Gastrocnemius medialis (tissue), 4 donors: ENCODE measurements at regions of chr6 and their contacts with region 1.

Region 1: GRCh38 chr6:11434565-11435326 is 102.8 kb upstream of the TMEM170B start:
- DNase-seq: peak in 1 of 2 donors; percentile 47
- ATAC-seq: peak; percentile 20 to 53
- H3K4me3 ChIP-seq: no peak overlapping the region
- H3K27ac ChIP-seq: peak overlapping the region in 3 of 4 donors; percentile 71 to 77 (median 76)
- H3K4me1 ChIP-seq: peaks cover 24 to 31% of the 10 kb centered on the region in 2 donors
- H3K27me3 ChIP-seq: no peaks in the 10 kb centered on the region
- CTCF ChIP-seq: no peak
- POLR2A ChIP-seq: no peak

Region 2: DNA sequence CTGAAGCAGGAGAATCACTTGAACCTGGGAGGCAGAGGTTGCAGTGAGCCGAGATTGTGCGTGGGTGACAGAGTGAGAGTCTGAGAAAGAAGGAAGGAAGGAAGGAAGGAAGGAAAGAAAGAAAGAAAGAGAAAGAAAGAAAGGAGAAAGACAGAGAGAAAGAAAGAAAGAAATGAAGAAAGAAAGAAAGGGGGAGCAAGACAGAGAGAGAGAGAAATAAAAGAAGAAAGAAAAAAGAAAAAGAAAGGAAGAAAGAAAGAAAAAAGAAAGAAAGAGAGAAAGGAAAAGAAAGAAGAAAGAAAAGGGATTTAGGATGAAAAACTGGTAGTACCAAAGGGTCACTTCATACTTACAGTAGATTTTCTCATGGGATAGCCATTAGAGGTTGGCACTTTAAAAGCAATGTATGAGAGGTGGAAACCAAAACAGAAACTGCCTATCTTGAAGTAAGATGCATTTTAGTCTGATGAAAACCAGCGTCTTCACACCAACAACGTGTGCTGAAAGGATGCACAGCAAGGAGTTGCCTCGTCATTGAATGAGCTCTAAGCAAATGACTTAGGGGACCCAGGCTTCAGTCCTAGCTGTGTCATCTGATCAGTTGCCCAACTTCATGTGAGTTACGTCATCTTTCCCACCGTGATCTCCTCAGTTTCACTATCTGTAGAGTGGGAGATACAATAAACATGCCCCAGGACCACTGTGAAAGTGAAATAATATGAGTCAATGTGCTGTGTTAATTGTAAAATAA is 68.4 kb before region 1 on chr6:
- in situ Hi-C with region 1: no loop called
- intact Hi-C with region 1: loop called (anchors 5 kb)
- DNase-seq: no peak
- ATAC-seq: no peak
- H3K4me3 ChIP-seq: no peak overlapping the region
- H3K27ac ChIP-seq: peak overlapping the region; percentile 79 to 88 (median 83)
- H3K4me1 ChIP-seq: peaks cover 0 to 23% of the 10 kb centered on the region in 2 donors
- H3K27me3 ChIP-seq: no peaks in the 10 kb centered on the region
- CTCF ChIP-seq: no peak
- POLR2A ChIP-seq: no peak

Region 3: DNA sequence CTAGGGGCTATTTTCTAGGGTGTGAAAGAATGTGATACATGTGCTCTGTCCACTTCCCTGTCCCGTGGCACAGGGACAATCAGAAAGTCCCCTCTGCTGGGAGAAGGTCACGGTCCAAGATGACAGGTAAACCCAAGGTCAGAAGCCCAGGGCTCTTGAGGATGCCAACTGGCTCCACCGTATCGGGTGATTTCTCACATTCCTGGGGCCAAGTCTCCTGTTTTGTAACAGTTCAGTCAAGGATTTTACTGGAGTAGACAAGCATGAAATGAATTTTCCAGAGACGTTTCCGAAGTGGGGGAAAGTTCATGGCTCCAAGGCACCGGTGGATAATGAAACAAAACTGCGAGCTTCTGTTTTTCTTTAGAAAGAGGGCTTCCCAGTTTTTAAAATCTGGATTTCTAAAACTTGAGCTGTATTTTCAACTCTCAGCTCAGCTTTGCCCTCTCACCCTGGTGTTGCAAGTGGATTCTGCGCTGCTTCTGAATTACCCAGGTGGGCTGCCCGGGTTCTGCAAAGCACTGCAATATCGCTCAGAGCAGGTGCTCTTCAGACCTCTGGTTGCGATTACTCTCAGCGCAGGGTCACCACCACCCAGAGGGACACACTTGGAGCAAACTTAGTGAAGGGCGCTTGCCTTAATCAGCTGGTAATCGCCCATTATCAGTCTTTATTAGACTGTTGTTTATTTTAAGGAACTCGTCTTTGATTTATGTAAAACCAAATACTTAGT is 38.4 kb after region 1 on chr6:
- in situ Hi-C with region 1: no loop called
- intact Hi-C with region 1: loop called (anchors 5 kb)
- DNase-seq: no peak
- ATAC-seq: peak in 1 of 2 donors; percentile 71
- H3K4me3 ChIP-seq: peak overlapping the region; percentile 28 to 57 (median 50)
- H3K27ac ChIP-seq: peak overlapping the region in 3 of 4 donors; percentile 39 to 54 (median 44)
- H3K4me1 ChIP-seq: peaks cover 16 to 17% of the 10 kb centered on the region in 2 donors
- H3K27me3 ChIP-seq: peaks cover 0 to 6% (median 6%) of the 10 kb centered on the region in 3 donors
- CTCF ChIP-seq: no peak
- POLR2A ChIP-seq: no peak